ENCODE measurements at regions of chr1 and their contacts with region 1.

Region 1: GRCh38 chr1:19918057-19918456 is 5.4 kb downstream of the PLA2G2E start:
- DNase-seq: peak; percentile 60
- H3K4me3 ChIP-seq: no peak overlapping the region
- H3K27ac ChIP-seq: no peak overlapping the region
- H3K27me3 ChIP-seq: peaks cover 11% of the 10 kb centered on the region
- CTCF ChIP-seq: peak; percentile 96

Region 2: GRCh38 chr1:19877181-19877778 is 40.8 kb before region 1 on chr1:
- CTCF ChIA-PET with region 1: no interaction called
- POLR2A ChIA-PET with region 1: no interaction called
- DNase-seq: no peak
- H3K4me3 ChIP-seq: no peak overlapping the region
- H3K27ac ChIP-seq: no peak overlapping the region
- H3K27me3 ChIP-seq: peaks cover 12% of the 10 kb centered on the region
- CTCF ChIP-seq: no peak

Region 3: GRCh38 chr1:19903600-19903999 is 14.5 kb before region 1 on chr1:
- CTCF ChIA-PET with region 1: interaction called, 10 read pairs
- POLR2A ChIA-PET with region 1: no interaction called
- DNase-seq: no peak
- H3K4me3 ChIP-seq: no peak overlapping the region
- H3K27ac ChIP-seq: no peak overlapping the region
- H3K27me3 ChIP-seq: no peaks in the 10 kb centered on the region
- CTCF ChIP-seq: no peak

Region 4: GRCh38 chr1:19942088-19942487 is 24.0 kb after region 1 on chr1:
- CTCF ChIA-PET with region 1: no interaction called
- POLR2A ChIA-PET with region 1: no interaction called
- DNase-seq: no peak
- H3K4me3 ChIP-seq: no peak overlapping the region
- H3K27ac ChIP-seq: no peak overlapping the region
- H3K27me3 ChIP-seq: peaks cover 13% of the 10 kb centered on the region
- CTCF ChIP-seq: no peak

Region 5: DNA sequence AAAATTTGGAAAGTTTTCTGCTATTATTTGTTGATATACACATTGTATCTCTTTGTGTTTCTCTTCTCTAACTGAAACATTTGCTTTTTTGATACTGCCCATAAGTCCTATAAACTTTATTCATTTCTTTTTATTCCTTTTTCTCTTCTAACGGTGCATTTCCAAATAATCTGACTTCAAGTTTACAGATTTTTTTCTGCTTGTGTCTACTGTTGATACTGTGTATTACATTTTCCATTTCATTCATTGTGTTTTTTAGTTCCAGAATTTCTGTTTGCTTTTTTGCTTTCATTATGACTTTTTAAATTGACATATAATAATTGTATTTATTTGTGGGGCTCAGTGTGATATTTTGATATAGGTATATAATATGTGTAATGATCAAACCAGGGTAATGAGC is 99.7 kb after region 1 on chr1:
- CTCF ChIA-PET with region 1: no interaction called
- POLR2A ChIA-PET with region 1: no interaction called
- DNase-seq: no peak
- H3K4me3 ChIP-seq: no peak overlapping the region
- H3K27ac ChIP-seq: no peak overlapping the region
- H3K27me3 ChIP-seq: no peaks in the 10 kb centered on the region
- CTCF ChIP-seq: no peak

Region 6: DNA sequence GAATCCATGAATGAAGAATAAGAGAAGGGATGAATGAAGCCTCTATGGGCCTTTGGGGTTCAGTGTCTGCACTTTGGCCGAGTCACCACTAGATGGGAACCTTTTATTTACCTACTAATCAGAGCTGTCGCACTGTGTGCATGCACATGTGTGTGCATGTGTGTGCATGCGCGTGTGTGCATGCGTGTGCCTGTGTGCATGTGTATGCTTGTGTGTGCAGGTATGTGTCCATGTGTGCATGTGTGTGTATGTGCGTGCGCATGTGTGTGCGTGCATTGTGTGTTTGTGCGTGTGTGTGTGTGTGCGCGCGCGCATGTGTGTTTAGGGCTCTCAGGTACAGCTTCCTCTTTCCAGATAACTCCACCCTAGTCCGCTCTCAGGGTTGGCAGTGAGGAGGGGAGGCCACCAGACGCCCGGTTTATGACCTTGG is 247.5 kb after region 1 on chr1:
- CTCF ChIA-PET with region 1: interaction called, 21 read pairs
- POLR2A ChIA-PET with region 1: no interaction called
- DNase-seq: no peak
- H3K4me3 ChIP-seq: no peak overlapping the region
- H3K27ac ChIP-seq: no peak overlapping the region
- H3K27me3 ChIP-seq: peaks cover 32% of the 10 kb centered on the region
- CTCF ChIP-seq: peak; percentile 40